Head of caudate nucleus (tissue), 42 donors: ENCODE measurements at regions of chr3 and their contacts with region 1.

Region 1: DNA sequence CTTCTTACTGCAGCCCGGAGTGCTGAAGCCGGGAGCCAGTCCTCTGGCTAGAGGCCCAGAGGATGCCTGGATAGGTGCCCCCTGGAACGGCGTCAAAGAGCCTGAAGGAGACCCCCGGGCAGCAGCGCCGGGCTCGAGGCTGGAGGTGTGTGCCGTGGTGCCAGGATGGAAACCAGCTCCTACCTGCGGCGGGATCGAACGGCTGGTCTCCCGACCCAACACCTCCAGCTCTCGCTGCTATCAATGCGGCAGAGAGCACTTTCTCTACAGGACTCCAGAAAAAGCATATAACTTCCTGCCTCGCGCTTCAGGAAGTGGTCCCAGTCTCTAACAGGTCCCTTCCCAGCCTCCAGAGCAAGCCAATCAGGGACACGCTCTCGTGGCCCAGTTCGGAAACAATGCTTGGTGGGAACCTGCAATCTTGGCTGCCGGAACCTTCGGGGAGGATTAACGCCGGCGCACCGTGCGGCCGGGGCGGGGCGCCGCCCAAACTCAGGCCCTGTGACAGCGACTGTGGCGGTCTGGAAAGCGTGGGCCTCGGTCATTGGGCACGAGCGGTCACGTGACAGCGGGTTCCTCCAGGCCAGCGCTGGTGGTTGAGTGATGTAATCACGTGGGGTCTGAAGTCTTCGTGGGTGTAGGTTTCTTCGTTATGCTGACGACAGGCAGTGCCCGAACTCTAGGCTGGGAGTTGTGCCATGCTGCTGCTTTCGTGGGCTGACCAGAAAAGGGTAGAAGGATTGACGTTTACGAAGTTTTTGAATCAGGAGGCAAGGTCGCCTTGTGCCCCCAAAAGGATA is at the start of gene SLC33A1:
- DNase-seq: peak; percentile 98 to 100 (median 100)

Region 2: DNA sequence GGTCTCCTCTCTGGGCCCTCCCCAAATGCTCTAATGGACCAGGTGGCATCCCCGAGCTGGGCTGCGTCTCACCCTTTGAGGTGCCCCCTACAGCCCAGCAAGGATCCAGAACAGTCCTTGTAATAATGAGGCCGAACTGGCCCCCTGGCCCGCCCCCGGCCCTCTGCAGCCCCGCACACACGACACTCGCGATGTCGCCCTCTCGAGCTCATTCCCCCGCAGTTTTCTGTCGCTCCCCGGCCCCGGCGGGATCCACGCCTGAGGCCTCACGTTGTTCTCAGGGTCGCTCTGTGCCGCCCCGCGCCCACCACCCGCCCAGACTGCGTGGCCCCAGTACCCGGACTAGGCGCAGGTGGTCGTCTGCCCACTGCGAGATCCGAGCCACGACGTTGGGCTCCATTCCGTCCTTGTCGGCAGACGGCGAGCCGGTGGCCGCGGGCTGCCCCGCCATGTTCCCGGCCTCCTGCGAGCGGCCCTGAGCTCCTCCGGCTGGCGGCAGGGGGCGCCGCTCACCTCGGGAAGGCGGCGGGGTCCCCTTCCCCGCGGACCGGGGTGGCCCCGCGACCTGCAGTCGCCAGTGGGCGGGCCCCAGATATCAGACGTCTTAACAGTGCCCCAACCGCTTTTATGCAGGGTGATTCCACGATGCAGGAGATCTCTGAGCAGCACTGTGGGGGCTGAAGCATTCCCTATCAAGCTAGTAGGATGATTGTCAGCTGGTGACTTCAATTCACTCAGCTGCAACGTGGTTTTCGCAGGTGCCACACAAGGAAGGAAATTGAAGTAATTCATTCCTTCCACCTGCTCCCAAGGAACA is 48.3 kb before region 1 on chr3 and contains the start of gene C3orf33:
- intact Hi-C with region 1: loop called (anchors 5 kb)
- DNase-seq: peak; percentile 24 to 89 (median 78)

Region 3: DNA sequence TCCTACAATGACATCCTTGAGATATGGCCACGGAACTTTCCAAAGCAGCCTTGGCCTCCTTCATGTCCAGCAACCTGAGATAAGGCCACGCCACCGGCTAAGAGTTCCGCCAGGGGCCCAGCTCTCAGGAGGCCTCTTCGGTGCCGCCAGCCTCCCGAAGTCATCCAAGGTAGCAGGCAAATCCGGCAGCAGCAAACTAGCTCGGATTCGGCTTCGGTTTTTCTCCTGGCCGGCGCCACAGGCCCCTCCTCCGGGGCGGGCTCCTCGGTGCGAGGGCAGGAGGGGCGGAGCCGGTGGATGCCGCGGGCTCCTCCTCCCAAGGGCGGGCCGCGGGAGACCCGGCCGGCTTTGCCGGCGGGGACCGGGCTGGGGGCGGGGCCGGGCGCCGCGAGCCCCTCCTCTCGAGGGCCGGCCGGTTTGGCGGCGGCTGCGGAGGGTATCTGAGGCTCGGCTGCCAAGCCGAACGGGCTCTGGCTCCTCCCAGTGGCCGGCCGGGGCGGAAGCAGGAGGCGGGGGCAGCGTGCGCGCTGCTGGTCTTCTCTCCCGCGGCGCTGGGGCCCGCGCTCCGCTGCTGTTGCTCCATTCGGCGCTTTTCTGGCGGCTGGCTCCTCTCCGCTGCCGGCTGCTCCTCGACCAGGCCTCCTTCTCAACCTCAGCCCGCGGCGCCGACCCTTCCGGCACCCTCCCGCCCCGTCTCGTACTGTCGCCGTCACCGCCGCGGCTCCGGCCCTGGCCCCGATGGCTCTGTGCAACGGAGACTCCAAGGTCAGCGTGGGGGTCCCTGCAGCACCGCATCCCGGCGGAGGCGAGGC is 16.0 kb after region 1 on chr3 and contains the start of gene GMPS:
- intact Hi-C with region 1: loop called (anchors 2 kb)
- DNase-seq: peak; percentile 81 to 98 (median 95)